ENCODE measurements at regions of chr1 and their contacts with region 1.

Region 1: GRCh38 chr1:15128520-15129313 is 24.8 kb upstream of the TMEM51 start:
- DNase-seq: no peak
- H3K4me3 ChIP-seq: no peak overlapping the region
- H3K27ac ChIP-seq: no peak overlapping the region
- H3K27me3 ChIP-seq: peaks cover 11% of the 10 kb centered on the region
- CTCF ChIP-seq: peak; percentile 92

Region 2: DNA sequence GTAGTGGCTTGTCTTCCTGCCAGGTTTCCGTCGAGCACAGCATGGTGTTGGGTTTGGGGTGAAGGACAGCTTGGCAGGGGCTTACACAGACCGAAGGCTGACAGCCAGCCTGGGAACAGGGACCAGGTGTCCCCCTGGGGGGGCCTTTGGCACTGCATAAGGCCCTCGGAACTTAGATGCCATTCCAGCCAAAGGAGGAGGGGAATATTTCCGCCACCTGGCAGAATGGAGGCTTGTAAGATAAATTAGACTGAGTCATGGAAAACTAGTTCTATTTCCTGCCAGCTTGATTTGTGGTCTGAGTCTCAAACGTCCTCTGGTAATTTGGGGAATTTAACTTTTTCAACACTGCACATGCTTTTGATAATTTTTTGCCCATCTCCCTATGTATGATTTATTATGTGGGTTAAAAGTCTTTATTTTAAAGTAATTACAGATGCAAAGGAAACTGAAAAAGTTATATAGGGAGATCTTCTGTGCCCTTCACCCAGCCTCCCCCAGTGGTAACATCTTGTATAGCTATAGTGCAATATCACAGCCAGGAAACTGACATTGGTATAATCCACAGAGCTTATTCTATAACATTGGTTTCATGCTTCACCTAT is 13.3 kb after region 1 on chr1:
- CTCF ChIA-PET with region 1: interaction called, 18 read pairs
- POLR2A ChIA-PET with region 1: no interaction called
- DNase-seq: no peak
- H3K4me3 ChIP-seq: no peak overlapping the region
- H3K27ac ChIP-seq: no peak overlapping the region
- H3K27me3 ChIP-seq: peaks cover 11% of the 10 kb centered on the region
- CTCF ChIP-seq: peak; percentile 12; the same call in 1 of the 2 replicates

Region 3: GRCh38 chr1:15242766-15243165 is 114.0 kb after region 1 on chr1:
- CTCF ChIA-PET with region 1: no interaction called
- POLR2A ChIA-PET with region 1: no interaction called
- DNase-seq: no peak
- H3K4me3 ChIP-seq: no peak overlapping the region
- H3K27ac ChIP-seq: no peak overlapping the region
- H3K27me3 ChIP-seq: peaks cover 4% of the 10 kb centered on the region
- CTCF ChIP-seq: no peak

Region 4: DNA sequence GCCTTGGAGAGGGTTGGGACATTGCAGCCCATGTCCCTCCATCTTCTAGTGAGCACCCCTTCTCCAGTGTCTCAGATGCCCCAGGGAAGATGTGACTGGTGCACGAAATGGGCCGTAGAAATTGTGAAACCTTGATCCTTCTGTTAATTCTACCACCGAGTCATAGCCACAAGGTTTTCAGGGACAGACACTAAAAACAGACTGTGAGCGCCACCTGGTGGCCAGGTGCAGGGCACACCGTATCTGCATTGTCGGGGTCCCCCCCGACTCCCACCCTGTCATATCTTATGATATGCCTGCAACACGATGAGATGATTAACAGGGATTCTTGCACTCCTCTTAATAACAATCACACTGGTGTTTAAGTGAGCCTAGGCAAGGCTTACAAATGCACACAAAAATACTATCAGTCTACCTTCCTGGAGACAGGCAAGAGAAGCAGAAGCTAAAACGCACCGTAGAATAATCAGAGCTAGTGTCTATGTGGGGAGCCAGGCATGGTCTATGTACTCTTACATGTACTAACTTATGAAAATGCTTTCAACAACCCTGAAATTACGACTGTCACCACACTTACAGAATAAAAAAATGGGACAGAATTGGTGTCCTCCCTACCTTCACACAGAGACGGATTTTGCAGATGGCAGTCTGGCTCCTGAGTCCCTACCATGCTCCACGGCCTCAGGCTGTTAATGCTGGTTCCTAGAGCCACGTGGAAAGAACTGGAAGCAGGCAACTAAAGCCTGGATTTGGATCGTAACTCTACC is 176.2 kb after region 1 on chr1:
- CTCF ChIA-PET with region 1: interaction called, 82 read pairs
- POLR2A ChIA-PET with region 1: interaction called, 3 read pairs
- DNase-seq: no peak
- H3K4me3 ChIP-seq: no peak overlapping the region
- H3K27ac ChIP-seq: no peak overlapping the region
- H3K27me3 ChIP-seq: peaks cover 3% of the 10 kb centered on the region
- CTCF ChIP-seq: peak; percentile 74